Sigmoid colon (tissue), 7 donors: ENCODE measurements at regions of chr4 and their contacts with region 1.

Region 1: DNA sequence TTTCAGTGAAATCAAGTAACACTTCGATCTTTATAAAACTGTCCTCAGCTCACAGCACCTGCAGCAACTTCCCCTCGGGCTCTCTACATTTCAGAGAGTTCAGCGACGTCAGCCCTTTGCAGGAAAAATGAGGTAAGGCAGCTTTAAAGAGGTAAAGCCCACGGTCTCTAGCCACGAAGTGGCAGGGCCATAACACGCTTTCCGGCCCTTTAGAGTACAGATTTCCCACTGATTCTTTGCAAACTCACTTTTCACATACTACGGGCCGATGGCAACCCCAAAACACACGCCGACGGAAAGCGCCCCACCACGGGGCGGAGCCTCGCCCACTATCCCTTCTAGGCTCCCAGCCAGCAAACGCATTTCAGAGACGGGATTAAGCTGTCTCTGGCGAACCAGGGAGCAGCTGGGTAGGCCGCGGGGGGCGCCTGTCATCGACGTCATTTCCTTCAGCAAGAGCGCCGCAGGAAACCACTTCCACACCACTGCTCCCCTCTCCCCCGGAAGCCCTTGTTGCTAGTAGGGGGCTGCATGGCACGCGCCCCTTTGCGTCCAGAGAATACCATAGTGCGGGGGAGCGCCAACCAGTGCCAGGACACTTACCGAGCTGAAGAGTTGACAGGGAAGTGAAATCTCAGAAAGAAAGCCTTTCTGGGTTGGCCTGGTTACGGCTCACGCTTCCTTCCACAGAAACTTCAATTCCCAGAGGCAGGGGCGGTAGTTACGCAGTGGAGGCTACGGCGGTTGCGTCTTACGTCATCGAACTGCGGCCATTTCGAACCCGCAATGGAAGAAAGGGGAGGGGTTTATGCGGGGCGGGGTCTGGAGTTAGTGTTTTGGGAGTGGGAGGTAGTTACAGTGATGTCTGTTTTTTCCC is at the start of gene TRMT10A:
- DNase-seq: peak; percentile 99
- H3K4me3 ChIP-seq: peak within 1 kb of the TSS; percentile 56 to 65 (median 64)
- H3K27ac ChIP-seq: peak within 1 kb of the TSS; percentile 89 to 96 (median 92)
- H3K4me1 ChIP-seq: peaks cover 0 to 33% (median 21%) of the 10 kb centered on the region in 4 donors
- H3K27me3 ChIP-seq: no peaks in the 10 kb centered on the region
- CTCF ChIP-seq: peak in 1 of 4 experiments; percentile 14
- EP300 ChIP-seq: peak in 2 of 4 donors; percentile 2 to 7
- POLR2A ChIP-seq: peak; percentile 69 to 78
- total RNA-seq, gene TRMT10A: 3.9 to 7.5 (median 6.4) TPM

Region 2: DNA sequence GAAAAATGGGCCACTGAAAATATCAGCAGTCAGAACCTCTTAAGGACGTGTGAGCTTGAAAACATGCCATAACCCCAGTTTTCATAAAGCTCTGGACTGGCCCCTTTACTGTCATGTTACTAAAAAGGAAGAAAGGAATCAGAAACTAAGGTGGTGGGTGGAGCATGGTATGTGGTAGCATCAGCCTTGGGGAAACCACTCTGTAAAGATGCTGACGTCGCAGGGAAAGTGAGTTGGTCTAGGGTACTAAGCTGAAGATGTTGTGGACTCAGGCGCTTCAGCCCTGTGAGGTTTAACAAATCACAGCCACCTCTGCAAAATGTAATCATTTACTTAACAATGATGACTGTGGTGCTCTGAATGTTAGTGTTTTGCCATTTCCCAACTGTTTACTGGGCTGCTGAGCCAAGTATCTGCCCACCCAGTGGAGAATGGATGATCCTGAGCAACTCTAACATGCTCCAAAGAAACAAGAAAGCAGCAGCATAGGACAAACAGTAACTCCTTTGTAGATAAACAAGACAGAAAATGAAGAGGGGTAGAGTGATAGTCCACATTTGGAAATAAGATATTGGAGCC is 60.7 kb after region 1 on chr4:
- intact Hi-C with region 1: no loop called
- DNase-seq: peak; percentile 59
- H3K4me3 ChIP-seq: no peak overlapping the region
- H3K27ac ChIP-seq: peak overlapping the region; percentile 75 to 78 (median 76)
- H3K4me1 ChIP-seq: peaks cover 0 to 45% (median 24%) of the 10 kb centered on the region in 4 donors
- H3K27me3 ChIP-seq: no peaks in the 10 kb centered on the region
- CTCF ChIP-seq: no peak
- EP300 ChIP-seq: no peak
- POLR2A ChIP-seq: no peak

Region 3: GRCh38 chr4:99723612-99724011 is 160.1 kb after region 1 on chr4:
- intact Hi-C with region 1: loop called (anchors 5 kb)
- DNase-seq: peak; percentile 88
- H3K4me3 ChIP-seq: no peak overlapping the region
- H3K27ac ChIP-seq: peak overlapping the region; percentile 77 to 87 (median 78)
- H3K4me1 ChIP-seq: peaks cover 0 to 53% (median 43%) of the 10 kb centered on the region in 4 donors
- H3K27me3 ChIP-seq: no peaks in the 10 kb centered on the region
- CTCF ChIP-seq: no peak
- EP300 ChIP-seq: peak; percentile 51 to 91 (median 66)
- POLR2A ChIP-seq: no peak

Region 4: DNA sequence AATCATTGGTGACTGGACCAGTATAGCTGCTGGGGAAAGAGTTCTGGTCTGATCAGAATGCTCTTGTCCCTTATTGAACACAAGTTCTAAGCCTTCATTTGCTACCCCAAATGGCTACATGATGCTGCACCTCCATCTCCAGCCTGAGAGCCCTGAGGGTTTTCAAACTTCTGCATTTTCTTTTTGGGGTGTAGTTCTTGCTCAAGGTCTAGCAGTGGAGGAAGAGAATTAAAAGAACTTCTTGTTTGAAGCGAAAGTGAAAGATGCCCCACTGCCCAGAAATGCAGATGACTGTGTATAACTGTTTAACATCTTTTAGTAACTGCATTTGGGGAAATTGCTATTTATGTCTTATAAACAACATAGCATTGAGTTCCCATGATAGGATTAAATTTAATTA is 292.1 kb after region 1 on chr4:
- intact Hi-C with region 1: no loop called
- DNase-seq: no peak
- H3K4me3 ChIP-seq: no peak overlapping the region
- H3K27ac ChIP-seq: peak overlapping the region in 1 of 4 donors; percentile 9
- H3K4me1 ChIP-seq: peaks cover 0 to 4% (median 0%) of the 10 kb centered on the region in 4 donors
- H3K27me3 ChIP-seq: no peaks in the 10 kb centered on the region
- CTCF ChIP-seq: no peak
- EP300 ChIP-seq: no peak
- POLR2A ChIP-seq: no peak

Region 5: DNA sequence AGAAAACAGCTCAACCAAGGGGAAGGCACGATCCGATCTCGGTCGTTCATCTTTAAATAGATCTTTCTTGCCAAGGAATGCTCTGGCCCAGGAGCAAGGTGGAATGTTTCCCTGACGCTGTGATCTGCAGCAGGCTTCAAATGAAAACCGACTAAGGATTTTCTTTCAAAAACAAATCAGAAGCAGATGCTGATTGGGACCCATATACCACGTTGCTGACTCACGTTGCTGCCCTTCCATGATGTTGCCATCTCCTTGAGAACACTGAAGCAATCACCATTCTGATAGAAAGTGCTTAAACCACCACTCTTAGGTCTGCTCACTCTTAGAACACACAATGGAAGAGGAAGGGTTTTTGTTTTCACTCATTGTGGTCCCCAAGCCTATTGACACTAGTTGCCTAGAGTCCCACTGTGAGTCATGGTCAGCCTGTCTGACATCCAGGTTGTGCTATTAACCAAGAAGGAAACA is 304.6 kb after region 1 on chr4:
- intact Hi-C with region 1: loop called (anchors 5 kb)
- DNase-seq: no peak
- H3K4me3 ChIP-seq: no peak overlapping the region
- H3K27ac ChIP-seq: peak overlapping the region; percentile 63 to 76 (median 68)
- H3K4me1 ChIP-seq: peaks cover 0 to 51% (median 35%) of the 10 kb centered on the region in 4 donors
- H3K27me3 ChIP-seq: no peaks in the 10 kb centered on the region
- CTCF ChIP-seq: no peak
- EP300 ChIP-seq: no peak
- POLR2A ChIP-seq: no peak

Region 6: DNA sequence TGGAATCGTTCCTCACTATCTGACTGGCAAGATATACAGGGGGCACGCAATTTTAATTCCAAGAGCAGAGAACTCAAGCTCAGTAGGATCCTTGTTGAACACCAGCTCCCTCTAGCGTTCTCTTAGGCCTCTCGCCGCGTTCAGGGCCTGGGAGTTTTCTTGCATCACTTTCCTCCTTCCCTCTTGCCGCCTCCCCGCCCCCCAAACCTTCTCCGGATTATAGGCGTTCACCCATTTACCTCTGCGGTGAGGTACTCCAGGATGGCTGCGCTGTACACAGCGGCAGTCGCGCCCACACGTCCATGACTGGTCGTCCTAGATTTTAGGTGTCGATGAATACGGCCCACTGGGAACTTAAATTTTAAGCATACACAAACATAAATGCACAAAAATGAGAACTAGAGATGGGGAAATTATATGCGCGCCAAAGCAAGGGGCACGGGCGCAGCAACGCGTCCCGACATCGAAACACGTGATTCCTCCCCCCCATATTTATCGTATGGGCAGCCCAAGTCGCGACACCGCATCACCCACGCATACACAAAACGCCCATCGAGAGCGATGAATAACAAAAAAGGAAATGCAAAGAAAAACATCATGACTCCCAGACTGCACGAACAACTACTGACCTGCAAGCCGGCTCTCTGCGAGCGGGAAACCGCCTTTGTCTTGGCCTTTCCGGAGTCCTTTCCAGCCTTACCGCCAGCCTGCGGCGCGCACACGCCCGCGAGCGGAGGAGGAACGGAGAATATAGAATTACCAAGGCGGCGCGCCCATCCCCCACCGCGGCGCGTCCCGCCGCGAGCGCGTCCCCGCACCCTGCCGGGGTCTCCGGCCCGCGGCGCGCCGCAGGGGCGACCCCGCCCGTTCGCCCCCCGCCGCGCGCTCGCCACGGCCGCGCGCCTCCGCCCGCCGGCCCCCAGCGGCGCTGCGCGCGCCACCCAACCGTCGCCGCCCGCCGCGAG is 385.8 kb after region 1 on chr4:
- intact Hi-C with region 1: loop called (anchors 1 kb)
- DNase-seq: peak; percentile 95
- H3K4me3 ChIP-seq: peak overlapping the region; percentile 63 to 76 (median 71)
- H3K27ac ChIP-seq: peak overlapping the region; percentile 92 to 97 (median 96)
- H3K4me1 ChIP-seq: peaks cover 0 to 43% (median 37%) of the 10 kb centered on the region in 4 donors
- H3K27me3 ChIP-seq: no peaks in the 10 kb centered on the region
- CTCF ChIP-seq: peak; percentile 83 to 92 (median 83)
- EP300 ChIP-seq: no peak
- POLR2A ChIP-seq: peak in 1 of 2 donors; percentile 10